ENCODE measurements at regions of chr19 and their contacts with region 1.

Region 1: DNA sequence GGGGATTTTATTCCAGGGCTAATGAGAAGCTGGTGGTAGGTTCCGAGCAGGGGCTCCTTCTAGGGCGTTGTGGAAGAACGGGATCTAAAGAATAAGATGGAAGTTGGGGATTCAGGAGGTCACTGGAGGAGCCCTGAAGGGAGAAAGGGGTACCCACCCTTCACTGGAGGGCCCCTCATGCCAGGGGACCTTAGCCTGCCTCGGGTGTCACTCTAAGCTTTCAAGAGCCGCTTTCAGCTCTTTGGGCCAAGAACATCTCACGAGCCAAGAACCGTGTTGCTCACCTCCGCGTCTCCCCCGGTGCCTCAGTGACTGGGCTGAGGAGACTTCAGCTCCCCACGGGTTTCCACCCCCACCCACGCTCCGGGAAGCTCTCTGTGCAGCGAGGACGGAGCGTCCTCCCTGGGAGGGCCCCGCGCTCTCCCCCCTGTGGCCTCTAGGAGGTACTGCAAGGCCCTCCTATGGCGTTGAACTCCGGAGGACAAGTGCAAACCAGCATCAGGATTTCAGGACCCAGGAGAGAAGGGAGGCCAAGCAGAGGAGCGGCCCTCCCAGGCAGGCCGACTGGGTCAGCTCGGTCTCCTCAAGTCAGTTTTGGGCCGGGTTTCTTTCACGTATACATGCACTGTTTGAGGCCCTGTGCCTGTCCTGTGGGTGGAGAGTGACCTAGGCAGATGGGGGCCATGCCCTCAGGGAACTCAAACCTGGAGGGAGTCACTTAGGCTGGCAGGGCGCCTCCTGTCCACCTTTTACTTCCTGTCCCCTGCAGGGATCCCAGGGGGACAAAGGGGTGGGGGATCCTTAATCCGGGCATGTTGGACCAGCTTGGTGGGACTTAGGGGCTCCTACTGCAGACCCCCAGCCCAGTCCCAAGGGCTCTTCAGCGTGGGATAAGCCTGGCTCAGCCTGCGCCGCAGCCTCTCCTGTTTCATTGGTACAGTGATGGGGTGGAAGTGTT is 5.1 kb upstream of the KRTDAP start:
- DNase-seq: peak; percentile 85
- H3K4me3 Mint-ChIP-seq: no peak overlapping the region
- H3K27ac Mint-ChIP-seq: no peak overlapping the region
- H3K4me1 Mint-ChIP-seq: peaks cover 5% of the 10 kb centered on the region
- H3K27me3 Mint-ChIP-seq: no peaks in the 10 kb centered on the region

Region 2: GRCh38 chr19:35347171-35347929 is 148.0 kb before region 1 on chr19 and contains the start of gene FFAR1:
- CTCF ChIA-PET with region 1: interaction called, 77 read pairs
- POLR2A ChIA-PET with region 1: interaction called, 4 read pairs
- intact Hi-C with region 1: no loop called
- DNase-seq: peak; percentile 82
- H3K4me3 Mint-ChIP-seq: peak within 1 kb of the TSS; percentile 63
- H3K27ac Mint-ChIP-seq: peak within 1 kb of the TSS; percentile 96
- H3K4me1 Mint-ChIP-seq: peaks cover 41% of the 10 kb centered on the region
- H3K27me3 Mint-ChIP-seq: peaks cover 4% of the 10 kb centered on the region
- total RNA-seq, gene FFAR1: 0.12 TPM in 1 of 2 experiments, not detected in the other

Region 3: DNA sequence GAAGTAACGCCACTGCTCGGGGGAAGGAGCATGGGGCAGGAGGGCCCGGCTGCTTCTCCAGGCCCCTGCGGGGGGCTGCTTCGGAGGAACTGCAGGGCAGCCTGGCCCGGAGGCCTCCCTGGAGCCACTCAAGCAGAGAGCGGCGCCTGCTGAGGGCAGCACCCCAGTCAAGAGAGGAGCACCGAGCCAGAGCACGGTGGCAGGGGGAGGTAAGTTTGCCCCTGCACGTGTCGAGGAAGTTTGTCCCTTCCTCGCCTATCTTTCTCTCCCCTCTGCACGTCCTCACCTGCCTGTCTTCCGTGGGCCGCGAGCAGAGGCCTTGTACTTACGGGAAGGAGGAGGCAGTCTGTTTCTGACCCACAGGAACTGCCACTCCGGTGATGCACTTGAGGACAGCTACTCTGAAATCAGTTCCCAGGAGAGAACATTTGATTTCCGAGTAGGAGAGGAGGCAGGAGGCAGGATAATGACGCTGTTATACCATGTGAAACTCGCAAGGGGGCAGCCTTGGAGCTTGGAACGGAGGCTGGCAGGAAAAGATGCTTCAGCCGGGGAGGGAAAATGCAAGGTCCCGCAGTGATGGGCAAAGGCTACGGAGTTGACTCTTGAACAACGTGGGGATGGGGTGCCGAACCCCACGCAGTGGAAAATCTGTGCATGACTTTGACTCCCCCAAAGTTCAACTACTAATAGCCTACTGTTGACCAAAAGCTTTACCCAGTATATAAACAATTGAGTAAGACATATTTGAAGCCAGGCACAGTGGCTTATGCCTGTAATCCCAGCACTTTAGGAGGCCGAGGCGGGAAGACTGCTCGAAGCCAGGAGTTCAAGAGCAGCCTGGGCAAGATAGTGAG is 142.7 kb before region 1 on chr19:
- CTCF ChIA-PET with region 1: interaction called, 77 read pairs
- POLR2A ChIA-PET with region 1: interaction called, 4 read pairs
- intact Hi-C with region 1: loop called (anchors 1 kb)
- DNase-seq: peak; percentile 84
- H3K4me3 Mint-ChIP-seq: no peak overlapping the region
- H3K27ac Mint-ChIP-seq: peak overlapping the region; percentile 42
- H3K4me1 Mint-ChIP-seq: peaks cover 30% of the 10 kb centered on the region
- H3K27me3 Mint-ChIP-seq: peaks cover 9% of the 10 kb centered on the region

Region 4: DNA sequence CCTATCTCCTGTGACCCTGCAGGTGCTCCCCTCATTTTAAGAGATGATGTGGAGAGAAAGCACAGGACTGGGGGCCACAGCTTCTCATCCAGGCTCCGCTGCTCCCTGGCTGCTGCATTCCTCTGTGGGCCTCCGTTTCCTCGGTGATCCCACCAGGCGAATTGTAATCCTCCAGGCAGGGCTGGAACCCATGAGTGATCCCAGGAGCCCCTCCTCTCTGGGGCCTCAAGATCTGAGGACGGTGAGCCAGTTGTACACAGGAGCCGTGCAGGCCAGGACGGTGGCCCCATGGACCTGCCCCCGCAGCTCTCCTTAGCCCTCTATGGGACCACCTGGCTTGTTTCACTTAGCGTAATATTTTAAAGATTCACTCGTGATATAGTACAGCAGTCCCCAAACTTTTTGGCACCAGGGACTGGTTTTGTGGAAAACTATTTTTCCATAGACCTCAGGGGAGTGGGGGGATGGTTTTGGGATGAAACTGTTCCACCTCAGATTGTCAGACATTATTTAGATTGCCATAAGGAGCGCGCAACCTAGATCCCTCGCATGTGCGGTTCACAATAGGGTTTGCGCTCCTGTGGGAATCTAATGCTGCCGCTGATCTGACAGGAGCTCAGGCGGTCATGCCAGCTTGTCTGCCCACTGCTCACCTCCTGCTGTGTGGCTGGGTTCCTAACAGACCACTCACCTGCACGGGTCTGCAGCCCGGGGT is 131.5 kb before region 1 on chr19:
- CTCF ChIA-PET with region 1: no interaction called
- POLR2A ChIA-PET with region 1: no interaction called
- intact Hi-C with region 1: no loop called
- DNase-seq: no peak
- H3K4me3 Mint-ChIP-seq: no peak overlapping the region
- H3K27ac Mint-ChIP-seq: no peak overlapping the region
- H3K4me1 Mint-ChIP-seq: peaks cover 3% of the 10 kb centered on the region
- H3K27me3 Mint-ChIP-seq: peaks cover 9% of the 10 kb centered on the region

Region 5: GRCh38 chr19:35468637-35469036 is 26.7 kb before region 1 on chr19:
- CTCF ChIA-PET with region 1: interaction called, 11 read pairs
- POLR2A ChIA-PET with region 1: no interaction called
- intact Hi-C with region 1: no loop called
- DNase-seq: peak; percentile 77
- H3K4me3 Mint-ChIP-seq: no peak overlapping the region
- H3K27ac Mint-ChIP-seq: peak overlapping the region; percentile 20
- H3K4me1 Mint-ChIP-seq: peaks cover 7% of the 10 kb centered on the region
- H3K27me3 Mint-ChIP-seq: no peaks in the 10 kb centered on the region

Region 6: DNA sequence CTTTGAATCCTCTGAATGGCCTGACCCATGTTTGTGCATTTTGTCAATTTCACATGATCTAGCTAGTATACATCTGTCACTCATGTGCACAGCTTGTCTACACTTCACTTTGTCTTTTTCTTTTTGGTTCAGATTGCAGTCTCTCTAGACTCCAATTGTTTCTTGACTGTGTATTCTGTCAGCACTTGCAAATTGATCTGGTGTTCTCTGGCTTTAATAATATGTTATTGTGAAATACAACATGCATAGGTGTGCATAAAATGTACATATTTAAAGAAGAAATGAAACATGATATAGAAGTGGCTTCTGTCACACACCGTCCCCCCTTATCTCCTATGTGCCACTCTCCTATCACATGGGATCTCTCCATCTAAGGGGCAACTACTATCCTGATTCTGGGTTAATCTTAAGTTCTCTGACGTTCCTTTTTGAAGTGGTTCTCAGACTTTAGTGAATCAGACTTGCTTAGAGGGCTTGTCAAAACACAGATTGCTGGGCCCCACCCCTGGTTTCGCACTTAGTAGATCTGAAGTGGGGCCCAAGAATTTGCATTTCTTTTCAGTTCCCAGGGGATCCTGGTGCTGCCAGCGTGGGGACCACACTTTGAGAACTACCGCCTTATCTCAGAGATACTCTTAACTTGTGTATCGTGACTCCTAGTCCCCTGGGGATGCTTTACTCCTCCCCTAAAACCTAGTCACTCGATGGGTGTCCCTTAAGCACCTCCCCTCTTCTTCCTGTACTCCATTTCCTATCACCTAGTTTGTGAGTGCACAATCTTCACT is 10.9 kb before region 1 on chr19:
- CTCF ChIA-PET with region 1: interaction called, 19 read pairs
- POLR2A ChIA-PET with region 1: no interaction called
- intact Hi-C with region 1: no loop called
- DNase-seq: peak; percentile 47
- H3K4me3 Mint-ChIP-seq: no peak overlapping the region
- H3K27ac Mint-ChIP-seq: peak overlapping the region; percentile 23
- H3K4me1 Mint-ChIP-seq: peaks cover 11% of the 10 kb centered on the region
- H3K27me3 Mint-ChIP-seq: no peaks in the 10 kb centered on the region

Region 7: DNA sequence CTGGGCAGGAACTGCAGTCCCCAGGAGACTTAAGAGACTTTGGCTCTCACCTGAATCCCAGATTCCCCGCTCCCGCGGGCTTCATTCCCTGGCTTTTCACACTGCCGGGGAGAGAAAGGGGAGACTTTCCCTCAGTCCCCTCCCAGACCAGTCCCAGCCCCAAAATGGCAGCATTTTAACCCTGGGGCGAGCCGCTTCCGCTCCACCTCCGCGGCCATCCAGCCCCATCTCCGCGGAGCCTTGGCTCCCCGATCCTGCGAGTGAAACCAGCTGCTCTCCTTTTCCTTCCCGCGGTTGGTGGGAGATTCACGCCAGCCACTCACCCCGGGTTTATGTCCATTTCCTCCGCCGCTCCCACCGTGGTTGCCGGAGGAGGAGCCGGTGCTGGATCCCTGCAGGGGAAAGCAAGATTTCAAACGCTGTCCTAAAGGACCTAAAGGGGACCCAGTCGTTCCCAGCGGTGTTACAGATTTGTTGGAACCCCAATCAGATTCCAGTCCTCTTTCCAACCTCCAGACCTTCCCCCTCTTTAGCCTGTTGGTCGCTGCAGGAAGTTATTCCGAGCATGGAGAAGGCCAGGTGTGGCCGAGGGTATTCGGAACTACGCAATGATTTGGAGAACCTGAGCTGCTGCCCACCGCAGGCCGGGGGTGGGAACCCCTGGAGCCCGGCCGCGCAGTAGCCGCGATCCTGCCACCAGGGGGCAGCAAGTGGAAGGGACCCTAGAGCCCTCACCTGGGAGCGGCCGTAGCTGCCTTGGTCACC is 14.7 kb after region 1 on chr19:
- CTCF ChIA-PET with region 1: interaction called, 35 read pairs
- POLR2A ChIA-PET with region 1: no interaction called
- intact Hi-C with region 1: no loop called
- DNase-seq: peak; percentile 81
- H3K4me3 Mint-ChIP-seq: peak overlapping the region; percentile 62
- H3K27ac Mint-ChIP-seq: no peak overlapping the region
- H3K4me1 Mint-ChIP-seq: peaks cover 13% of the 10 kb centered on the region
- H3K27me3 Mint-ChIP-seq: peaks cover 29% of the 10 kb centered on the region

Region 8: GRCh38 chr19:35716801-35717666 is 221.6 kb after region 1 on chr19:
- CTCF ChIA-PET with region 1: no interaction called
- POLR2A ChIA-PET with region 1: no interaction called
- intact Hi-C with region 1: no loop called
- DNase-seq: peak; percentile 97
- H3K4me3 Mint-ChIP-seq: peak overlapping the region; percentile 91
- H3K27ac Mint-ChIP-seq: peak overlapping the region; percentile 99
- H3K4me1 Mint-ChIP-seq: peaks cover 39% of the 10 kb centered on the region
- H3K27me3 Mint-ChIP-seq: peaks cover 1% of the 10 kb centered on the region